ENCODE measurements at regions of chr5 and their contacts with region 1.

Region 1: GRCh38 chr5:170100066-170100943 is 5.4 kb upstream of the FOXI1 start:
- DNase-seq: peak in 5 of 6 donors; percentile 37 to 75 (median 57)
- ATAC-seq: peak in 3 of 4 donors; percentile 70 to 79 (median 74)
- H3K4me3 ChIP-seq: no peak overlapping the region
- H3K27ac ChIP-seq: no peak overlapping the region
- H3K4me1 ChIP-seq: no peaks in the 10 kb centered on the region
- H3K27me3 ChIP-seq: no peaks in the 10 kb centered on the region
- CTCF ChIP-seq: peak in 3 of 4 donors; percentile 39 to 49 (median 46)

Region 2: GRCh38 chr5:169970911-169971765 is 129.2 kb before region 1 on chr5:
- intact Hi-C with region 1: no loop called
- DNase-seq: no peak
- ATAC-seq: peak in 1 of 4 donors; percentile 49
- H3K4me3 ChIP-seq: no peak overlapping the region
- H3K27ac ChIP-seq: no peak overlapping the region
- H3K4me1 ChIP-seq: no peaks in the 10 kb centered on the region
- H3K27me3 ChIP-seq: no peaks in the 10 kb centered on the region
- CTCF ChIP-seq: no peak

Region 3: DNA sequence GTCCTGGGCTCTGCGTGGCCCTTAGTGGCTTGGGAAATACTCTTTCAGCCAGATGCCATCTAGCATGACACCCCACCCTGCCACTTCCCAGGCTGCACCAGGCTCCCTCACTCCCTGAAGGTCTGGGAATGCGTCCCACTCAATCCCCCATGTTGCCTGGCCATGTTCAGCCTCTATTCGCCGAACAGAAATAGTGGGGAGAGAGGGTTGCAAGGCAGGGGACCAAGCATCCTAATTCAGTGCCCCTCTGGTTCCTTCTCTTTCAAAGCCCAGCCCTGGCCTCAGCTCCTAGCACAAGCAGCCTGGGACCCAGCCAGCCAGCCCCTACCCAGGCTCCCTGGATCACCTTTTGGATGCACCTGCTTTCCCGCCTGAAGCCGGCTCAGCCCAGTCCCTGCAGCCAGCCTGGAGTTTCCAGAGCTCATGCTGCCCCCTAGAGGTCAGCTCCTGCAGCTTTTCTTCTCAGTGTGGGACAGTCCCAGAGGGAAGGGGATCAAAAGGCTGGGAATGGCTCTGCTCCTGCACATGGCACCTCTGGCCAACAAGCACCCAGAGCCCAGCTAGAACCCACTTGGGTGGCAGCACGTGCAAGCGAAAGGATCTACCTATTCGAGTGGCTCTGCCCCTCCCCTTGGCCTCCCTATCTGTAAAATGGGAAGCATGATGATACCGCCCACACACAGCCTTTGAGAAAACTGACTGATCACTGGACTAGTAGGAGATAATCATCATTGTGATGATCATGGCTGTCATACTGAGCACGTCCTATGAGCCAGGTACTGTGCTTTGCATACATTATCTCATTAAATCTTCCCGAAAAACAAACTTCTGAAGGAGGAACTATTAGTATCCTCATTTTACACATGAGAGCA is 83.7 kb after region 1 on chr5:
- intact Hi-C with region 1: loop called in 2 of 3 experiments (anchors 5 kb)
- DNase-seq: peak; percentile 29 to 80 (median 65)
- ATAC-seq: peak; percentile 61 to 90 (median 80)
- H3K4me3 ChIP-seq: no peak overlapping the region
- H3K27ac ChIP-seq: no peak overlapping the region
- H3K4me1 ChIP-seq: no peaks in the 10 kb centered on the region
- H3K27me3 ChIP-seq: no peaks in the 10 kb centered on the region
- CTCF ChIP-seq: peak; percentile 58 to 68 (median 61)

Region 4: GRCh38 chr5:170190436-170191134 is 90.3 kb after region 1 on chr5:
- intact Hi-C with region 1: loop called in 1 of 3 experiments (anchors 5 kb)
- DNase-seq: no peak
- ATAC-seq: no peak
- H3K4me3 ChIP-seq: no peak overlapping the region
- H3K27ac ChIP-seq: no peak overlapping the region
- H3K4me1 ChIP-seq: no peaks in the 10 kb centered on the region
- H3K27me3 ChIP-seq: no peaks in the 10 kb centered on the region
- CTCF ChIP-seq: no peak

Region 5: DNA sequence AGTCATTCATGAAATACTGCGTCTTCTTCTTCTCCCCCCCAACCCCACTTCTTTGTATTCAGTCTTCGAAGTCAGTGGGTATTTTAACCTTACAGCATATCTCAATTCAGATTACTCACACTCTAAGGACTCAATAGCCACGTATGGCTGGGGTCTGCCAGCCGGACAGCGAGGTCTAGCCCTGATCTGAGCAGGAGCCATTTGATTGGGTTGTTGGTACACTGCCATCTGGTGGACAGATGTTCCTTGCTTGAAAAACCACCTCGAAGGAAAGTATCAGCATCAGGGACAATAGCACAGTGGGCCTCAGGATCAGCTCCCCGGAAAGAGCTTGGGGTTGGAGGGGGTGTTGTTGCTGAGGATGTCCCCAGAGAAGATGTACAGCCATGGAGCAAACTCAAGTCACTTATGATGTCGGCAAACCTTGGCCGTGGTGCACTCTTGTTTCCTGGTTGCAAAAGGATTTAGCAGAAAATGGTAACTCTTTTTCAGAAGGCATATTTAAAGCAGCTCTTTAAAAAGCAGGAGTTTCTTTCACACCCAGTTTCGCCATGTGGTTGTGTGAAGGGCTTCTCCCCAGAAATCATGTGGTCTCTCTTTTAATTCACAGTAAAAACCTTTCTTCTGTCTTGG is 320.6 kb after region 1 on chr5:
- intact Hi-C with region 1: loop called in 1 of 3 experiments (anchors 5 kb)
- DNase-seq: peak in 3 of 6 donors; percentile 17 to 54 (median 36)
- ATAC-seq: peak; percentile 43 to 85 (median 71)
- H3K4me3 ChIP-seq: no peak overlapping the region
- H3K27ac ChIP-seq: no peak overlapping the region
- H3K4me1 ChIP-seq: no peaks in the 10 kb centered on the region
- H3K27me3 ChIP-seq: no peaks in the 10 kb centered on the region
- CTCF ChIP-seq: peak; percentile 53 to 75 (median 64)